Psoas muscle (tissue), 8 donors: ENCODE measurements at regions of chr11 and their contacts with region 1.

Region 1: GRCh38 chr11:36702330-36703055 is 104.5 kb upstream of the RAG2 start:
- DNase-seq: no peak
- ATAC-seq: peak; percentile 84 to 98 (median 91)
- H3K4me3 ChIP-seq: no peak overlapping the region
- H3K27ac ChIP-seq: no peak overlapping the region
- H3K4me1 ChIP-seq: no peaks in the 10 kb centered on the region
- H3K27me3 ChIP-seq: no peaks in the 10 kb centered on the region
- CTCF ChIP-seq: peak; percentile 77

Region 2: GRCh38 chr11:34940026-34940677 is 1762.3 kb before region 1 on chr11:
- intact Hi-C with region 1: loop called in 1 of 2 experiments (anchors 5 kb)
- DNase-seq: no peak
- ATAC-seq: no peak
- H3K4me3 ChIP-seq: no peak overlapping the region
- H3K27ac ChIP-seq: no peak overlapping the region
- H3K4me1 ChIP-seq: peaks cover 9% of the 10 kb centered on the region
- H3K27me3 ChIP-seq: no peaks in the 10 kb centered on the region
- CTCF ChIP-seq: no peak

Region 3: GRCh38 chr11:36622431-36623136 is 79.9 kb before region 1 on chr11:
- intact Hi-C with region 1: no loop called
- DNase-seq: no peak
- ATAC-seq: peak in 2 of 4 donors; percentile 54 to 57
- H3K4me3 ChIP-seq: no peak overlapping the region
- H3K27ac ChIP-seq: no peak overlapping the region
- H3K4me1 ChIP-seq: peaks cover 13% of the 10 kb centered on the region
- H3K27me3 ChIP-seq: no peaks in the 10 kb centered on the region
- CTCF ChIP-seq: peak; percentile 40

Region 4: GRCh38 chr11:36746886-36747710 is 44.6 kb after region 1 on chr11:
- intact Hi-C with region 1: loop called (anchors 1 to 2 kb)
- DNase-seq: peak; percentile 65 to 86
- ATAC-seq: peak; percentile 95 to 100 (median 99)
- H3K4me3 ChIP-seq: no peak overlapping the region
- H3K27ac ChIP-seq: no peak overlapping the region
- H3K4me1 ChIP-seq: no peaks in the 10 kb centered on the region
- H3K27me3 ChIP-seq: no peaks in the 10 kb centered on the region
- CTCF ChIP-seq: peak; percentile 98